Caco-2 (cell line): ENCODE measurements at regions of chr7 and their contacts with region 1.

Region 1: GRCh38 chr7:135509903-135510602 is at the start of gene CNOT4:
- DNase-seq: peak; percentile 95 to 97
- H3K4me3 ChIP-seq: peak within 1 kb of the TSS; percentile 82
- H3K4me3 Mint-ChIP-seq: no peak within 1 kb of the TSS
- H3K27ac Mint-ChIP-seq: no peak within 1 kb of the TSS
- H3K4me1 ChIP-seq: peaks cover 8% of the 10 kb centered on the region
- H3K4me1 Mint-ChIP-seq: no peaks in the 10 kb centered on the region
- H3K27me3 ChIP-seq: no peaks in the 10 kb centered on the region
- H3K27me3 Mint-ChIP-seq: no peaks in the 10 kb centered on the region
- CTCF ChIP-seq: no peak
- total RNA-seq, gene CNOT4: 22.0 and 22.6 TPM in 2 replicates

Region 2: GRCh38 chr7:135281363-135281949 is 228.6 kb before region 1 on chr7:
- CTCF ChIA-PET with region 1: no interaction called
- POLR2A ChIA-PET with region 1: no interaction called
- intact Hi-C with region 1: loop called (anchors 2 kb)
- DNase-seq: peak; percentile 84 to 86
- H3K4me3 ChIP-seq: no peak overlapping the region
- H3K4me3 Mint-ChIP-seq: no peak overlapping the region
- H3K27ac Mint-ChIP-seq: no peak overlapping the region
- H3K4me1 ChIP-seq: no peaks in the 10 kb centered on the region
- H3K4me1 Mint-ChIP-seq: no peaks in the 10 kb centered on the region
- H3K27me3 ChIP-seq: no peaks in the 10 kb centered on the region
- H3K27me3 Mint-ChIP-seq: peaks cover 2% of the 10 kb centered on the region
- CTCF ChIP-seq: peak; percentile 98

Region 3: DNA sequence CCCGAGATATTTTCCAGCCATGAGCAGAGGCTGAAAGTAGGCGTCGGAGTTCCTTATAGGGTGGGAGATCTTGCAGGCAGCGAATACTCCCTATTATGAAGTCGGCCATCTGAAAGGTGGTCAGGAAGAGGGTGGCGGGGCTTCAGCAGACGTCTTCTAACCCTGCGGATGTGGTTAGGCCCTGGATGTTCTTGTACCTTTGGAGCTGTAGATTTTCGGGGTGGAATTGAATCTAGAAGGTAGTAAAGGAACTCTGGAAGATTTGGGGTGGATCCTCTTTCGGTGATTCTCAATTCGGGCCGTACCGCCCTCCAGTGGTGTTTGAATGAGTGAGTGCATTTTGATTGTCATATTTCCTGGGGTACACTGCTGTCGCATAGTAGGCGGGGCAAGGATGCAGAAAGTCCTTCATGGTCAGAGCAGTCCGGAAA is 48.3 kb after region 1 on chr7:
- CTCF ChIA-PET with region 1: no interaction called
- POLR2A ChIA-PET with region 1: no interaction called
- intact Hi-C with region 1: loop called (anchors 1 kb)
- DNase-seq: peak; percentile 72 to 74
- H3K4me3 ChIP-seq: peak overlapping the region; percentile 82
- H3K4me3 Mint-ChIP-seq: no peak overlapping the region
- H3K27ac Mint-ChIP-seq: no peak overlapping the region
- H3K4me1 ChIP-seq: peaks cover 28% of the 10 kb centered on the region
- H3K4me1 Mint-ChIP-seq: peaks cover 7% of the 10 kb centered on the region
- H3K27me3 ChIP-seq: no peaks in the 10 kb centered on the region
- H3K27me3 Mint-ChIP-seq: peaks cover 4% of the 10 kb centered on the region
- CTCF ChIP-seq: peak; percentile 45 to 51

Region 4: DNA sequence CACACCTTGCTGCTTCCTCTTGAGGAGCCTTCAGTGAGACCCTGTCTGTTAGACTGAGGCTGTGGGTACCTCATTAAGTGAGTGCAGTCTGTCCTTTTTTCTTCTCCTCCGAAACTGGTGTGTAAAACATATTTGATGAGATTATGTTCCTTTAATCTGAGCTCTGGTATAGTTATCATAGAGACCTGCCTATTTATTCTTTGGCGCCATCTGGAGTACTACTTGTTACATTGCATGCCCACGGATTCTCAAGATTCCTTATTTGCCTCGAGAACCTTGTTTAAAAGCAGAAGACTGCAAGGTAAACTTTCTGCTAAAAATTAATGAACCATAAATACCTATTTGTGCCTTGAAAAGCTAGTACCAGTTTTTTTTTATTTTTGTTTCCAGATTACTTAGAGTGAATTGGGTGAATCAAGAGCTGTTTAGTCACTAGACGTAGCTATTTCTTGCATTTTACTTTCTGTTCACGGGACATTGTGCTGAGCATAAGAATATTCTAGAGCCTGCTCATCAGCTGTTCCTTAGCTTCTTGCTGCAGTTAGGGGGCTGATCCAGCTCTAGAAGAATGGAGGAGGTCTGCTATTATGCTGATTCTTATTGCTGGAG is 135.3 kb after region 1 on chr7:
- CTCF ChIA-PET with region 1: no interaction called
- POLR2A ChIA-PET with region 1: no interaction called
- intact Hi-C with region 1: loop called (anchors 1 kb)
- DNase-seq: peak in 1 of 2 experiments; percentile 37
- H3K4me3 ChIP-seq: no peak overlapping the region
- H3K4me3 Mint-ChIP-seq: no peak overlapping the region
- H3K27ac Mint-ChIP-seq: no peak overlapping the region
- H3K4me1 ChIP-seq: no peaks in the 10 kb centered on the region
- H3K4me1 Mint-ChIP-seq: no peaks in the 10 kb centered on the region
- H3K27me3 ChIP-seq: no peaks in the 10 kb centered on the region
- H3K27me3 Mint-ChIP-seq: no peaks in the 10 kb centered on the region
- CTCF ChIP-seq: peak; percentile 64 to 73